Posterior vena cava (tissue), 2 donors: ENCODE measurements at regions of chrX and their contacts with region 1.

Region 1: DNA sequence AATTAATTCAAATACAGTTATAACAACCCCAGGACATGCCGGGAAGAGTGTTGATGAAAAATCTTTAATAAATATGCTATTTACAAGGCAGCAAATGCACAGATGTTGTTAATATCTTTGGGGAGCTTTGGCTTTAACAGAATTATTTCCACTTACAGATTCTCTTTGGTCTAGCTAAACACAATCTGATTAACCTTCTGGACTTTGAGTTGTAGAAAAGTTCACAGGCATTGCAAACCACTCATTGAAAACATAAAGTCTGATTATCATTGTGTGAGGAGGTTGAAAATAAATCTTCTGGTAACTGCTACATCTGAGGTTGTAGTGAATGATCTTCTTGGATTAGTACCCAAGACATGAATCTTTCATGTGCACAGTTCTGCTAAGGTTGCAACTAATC is 255.6 kb downstream of the LHFPL1 start:
- DNase-seq: no peak

Region 2: GRCh38 chrX:112473654-112474053 is 49.5 kb after region 1 on chrX:
- intact Hi-C with region 1: no loop called
- DNase-seq: no peak

Region 3: GRCh38 chrX:112545051-112545450 is 120.9 kb after region 1 on chrX:
- intact Hi-C with region 1: loop called in 1 of 2 experiments (anchors 5 kb)
- DNase-seq: no peak

Region 4: DNA sequence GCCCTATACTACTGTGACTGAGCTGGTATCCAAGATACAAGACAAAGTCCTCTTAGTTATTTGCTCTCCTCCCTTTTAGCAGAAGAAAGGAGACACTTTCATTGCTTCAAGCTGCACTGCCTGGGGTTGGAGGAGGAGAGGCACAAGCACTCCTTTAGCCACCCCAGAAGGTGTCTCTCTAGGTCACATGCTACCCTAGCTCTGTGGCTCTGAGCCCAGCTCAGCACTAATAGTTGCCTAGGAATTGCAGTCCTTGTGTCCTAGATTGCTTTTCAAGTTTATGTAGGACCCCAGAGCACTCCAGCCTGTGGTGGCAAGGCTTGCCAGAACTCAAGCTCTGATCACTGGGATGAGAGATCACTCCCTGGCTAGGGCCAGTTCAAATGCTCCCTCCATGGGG is 280.0 kb after region 1 on chrX:
- intact Hi-C with region 1: no loop called
- DNase-seq: no peak